ENCODE measurements at regions of chr4 and their contacts with region 1.

Region 1: GRCh38 chr4:8192748-8193738 is 6.0 kb upstream of the SH3TC1 start:
- DNase-seq: peak; percentile 73
- ATAC-seq: peak; percentile 75
- H3K4me3 ChIP-seq: no peak overlapping the region
- H3K27ac ChIP-seq: no peak overlapping the region
- H3K4me1 ChIP-seq: peaks cover 73% of the 10 kb centered on the region
- H3K27me3 ChIP-seq: peaks cover 7 to 60% of the 10 kb centered on the region in 2 experiments; a peak in 3 of 5 replicates
- CTCF ChIP-seq: peak; percentile 85
- EP300 ChIP-seq: no peak
- POLR2A ChIP-seq: no peak
- RAD21 ChIP-seq: no peak

Region 2: GRCh38 chr4:7156761-7157488 is 1036.1 kb before region 1 on chr4:
- CTCF ChIA-PET with region 1: no interaction called
- POLR2A ChIA-PET with region 1: no interaction called
- in situ Hi-C with region 1: no loop called
- intact Hi-C with region 1: no loop called
- DNase-seq: no peak
- ATAC-seq: peak; percentile 50
- H3K4me3 ChIP-seq: peak overlapping the region in 1 of 3 experiments; percentile 19; a peak in 1 of 6 replicates
- H3K27ac ChIP-seq: no peak overlapping the region
- H3K4me1 ChIP-seq: peaks cover 50% of the 10 kb centered on the region
- H3K27me3 ChIP-seq: peaks cover 8 to 29% of the 10 kb centered on the region in 2 experiments; a peak in 4 of 5 replicates
- CTCF ChIP-seq: no peak
- EP300 ChIP-seq: no peak
- POLR2A ChIP-seq: no peak
- RAD21 ChIP-seq: no peak

Region 3: DNA sequence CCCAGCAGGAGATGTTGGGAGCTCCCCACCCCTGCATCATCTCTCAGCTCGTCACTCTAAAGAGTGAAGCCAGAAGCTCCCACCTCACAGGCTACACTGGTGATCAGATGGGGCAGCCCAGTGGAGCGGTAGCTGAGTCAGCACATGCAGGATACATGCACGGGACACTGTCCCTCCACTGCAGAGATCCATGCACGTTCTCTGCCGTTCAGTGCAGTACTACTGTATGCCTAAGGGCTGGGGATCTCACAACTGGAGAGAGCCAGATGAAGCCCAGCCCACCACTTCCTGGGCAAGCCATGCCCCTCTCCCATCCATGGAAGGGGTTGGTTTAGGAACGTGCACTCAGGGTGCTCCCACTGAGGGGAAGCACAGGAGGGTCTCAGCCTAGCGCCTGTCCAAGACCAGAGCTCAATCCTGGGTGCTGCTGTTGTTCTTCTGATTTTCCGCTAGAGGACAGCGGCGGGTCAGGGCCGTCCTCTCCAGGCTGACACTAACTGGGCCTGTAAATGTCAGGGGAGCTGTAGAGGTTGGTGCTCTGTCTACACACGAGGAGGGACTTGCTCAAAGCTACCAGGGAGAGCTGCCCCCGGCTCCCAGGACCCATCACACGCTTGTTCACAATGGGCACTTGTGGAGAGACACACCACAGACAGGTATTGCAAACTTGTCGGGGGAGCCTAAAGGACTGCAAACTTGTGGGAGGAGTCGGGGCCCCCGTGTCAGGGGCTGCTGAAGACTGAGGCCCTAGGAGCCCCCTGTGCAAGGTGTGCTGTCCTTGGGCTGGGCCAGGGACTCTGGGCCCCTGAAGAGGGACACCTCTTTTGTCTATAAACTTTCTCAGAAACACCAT is 16.3 kb before region 1 on chr4:
- CTCF ChIA-PET with region 1: interaction called, 9 read pairs
- POLR2A ChIA-PET with region 1: interaction called, 4 read pairs
- in situ Hi-C with region 1: no loop called
- intact Hi-C with region 1: loop called (anchors 1 kb)
- DNase-seq: peak; percentile 65
- ATAC-seq: peak; percentile 94
- H3K4me3 ChIP-seq: peak overlapping the region in 1 of 3 experiments; percentile 31; a peak in 1 of 6 replicates
- H3K27ac ChIP-seq: no peak overlapping the region
- H3K4me1 ChIP-seq: peaks cover 26% of the 10 kb centered on the region
- H3K27me3 ChIP-seq: peaks cover 10 to 30% of the 10 kb centered on the region in 2 experiments; a peak in 3 of 5 replicates
- CTCF ChIP-seq: peak; percentile 96
- EP300 ChIP-seq: no peak
- POLR2A ChIP-seq: no peak
- RAD21 ChIP-seq: peak; percentile 90

Region 4: GRCh38 chr4:8241895-8242696 is 49.1 kb after region 1 on chr4:
- CTCF ChIA-PET with region 1: interaction called, 3 read pairs
- POLR2A ChIA-PET with region 1: interaction called, 5 read pairs
- in situ Hi-C with region 1: no loop called
- intact Hi-C with region 1: loop called (anchors 5 kb)
- DNase-seq: peak; percentile 78
- ATAC-seq: peak; percentile 72
- H3K4me3 ChIP-seq: no peak overlapping the region
- H3K27ac ChIP-seq: no peak overlapping the region
- H3K4me1 ChIP-seq: peaks cover 49% of the 10 kb centered on the region
- H3K27me3 ChIP-seq: no peaks in the 10 kb centered on the region
- CTCF ChIP-seq: peak; percentile 93
- EP300 ChIP-seq: no peak
- POLR2A ChIP-seq: no peak
- RAD21 ChIP-seq: peak; percentile 91

Region 5: DNA sequence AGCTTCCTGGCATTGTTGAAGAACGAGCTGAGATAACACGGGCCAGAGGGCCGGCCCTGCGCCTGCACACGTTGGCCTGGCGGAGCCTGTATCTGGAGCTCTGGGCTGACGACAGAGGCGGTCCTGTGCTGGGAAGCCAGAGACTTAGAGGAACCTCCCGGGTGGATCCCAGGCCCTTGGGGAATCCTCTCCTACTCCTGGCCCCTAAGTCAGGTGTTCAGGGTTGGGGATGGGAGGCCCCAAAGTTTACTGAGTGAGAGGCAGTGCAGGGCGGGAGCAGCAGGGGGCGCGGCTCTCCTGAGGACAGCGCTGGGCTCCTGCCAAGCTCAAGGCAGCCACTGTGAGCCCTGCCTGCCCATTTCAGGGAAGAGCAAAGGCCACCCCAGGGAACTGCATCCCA is 74.0 kb after region 1 on chr4:
- CTCF ChIA-PET with region 1: no interaction called
- POLR2A ChIA-PET with region 1: no interaction called
- in situ Hi-C with region 1: no loop called
- intact Hi-C with region 1: no loop called
- DNase-seq: peak; percentile 52
- ATAC-seq: peak; percentile 83
- H3K4me3 ChIP-seq: no peak overlapping the region
- H3K27ac ChIP-seq: no peak overlapping the region
- H3K4me1 ChIP-seq: peaks cover 28% of the 10 kb centered on the region
- H3K27me3 ChIP-seq: peaks cover 11 to 57% of the 10 kb centered on the region in 2 experiments
- CTCF ChIP-seq: peak; percentile 92
- EP300 ChIP-seq: no peak
- POLR2A ChIP-seq: no peak
- RAD21 ChIP-seq: peak; percentile 91